Activated CD8-positive, alpha-beta T cell treated with anti-CD3 and anti-CD28 coated beads for 36 hours (primary cell): ENCODE measurements at regions of chr10 and their contacts with region 1.

Region 1: GRCh38 chr10:97701438-97702069 is 12.0 kb upstream of the MARVELD1 start:
- DNase-seq: peak; percentile 61
- ATAC-seq: peak; percentile 99
- H3K4me3 Mint-ChIP-seq: no peak overlapping the region
- H3K27ac Mint-ChIP-seq: no peak overlapping the region
- H3K4me1 Mint-ChIP-seq: no peaks in the 10 kb centered on the region
- H3K27me3 Mint-ChIP-seq: no peaks in the 10 kb centered on the region
- CTCF ChIP-seq: peak; percentile 89

Region 2: DNA sequence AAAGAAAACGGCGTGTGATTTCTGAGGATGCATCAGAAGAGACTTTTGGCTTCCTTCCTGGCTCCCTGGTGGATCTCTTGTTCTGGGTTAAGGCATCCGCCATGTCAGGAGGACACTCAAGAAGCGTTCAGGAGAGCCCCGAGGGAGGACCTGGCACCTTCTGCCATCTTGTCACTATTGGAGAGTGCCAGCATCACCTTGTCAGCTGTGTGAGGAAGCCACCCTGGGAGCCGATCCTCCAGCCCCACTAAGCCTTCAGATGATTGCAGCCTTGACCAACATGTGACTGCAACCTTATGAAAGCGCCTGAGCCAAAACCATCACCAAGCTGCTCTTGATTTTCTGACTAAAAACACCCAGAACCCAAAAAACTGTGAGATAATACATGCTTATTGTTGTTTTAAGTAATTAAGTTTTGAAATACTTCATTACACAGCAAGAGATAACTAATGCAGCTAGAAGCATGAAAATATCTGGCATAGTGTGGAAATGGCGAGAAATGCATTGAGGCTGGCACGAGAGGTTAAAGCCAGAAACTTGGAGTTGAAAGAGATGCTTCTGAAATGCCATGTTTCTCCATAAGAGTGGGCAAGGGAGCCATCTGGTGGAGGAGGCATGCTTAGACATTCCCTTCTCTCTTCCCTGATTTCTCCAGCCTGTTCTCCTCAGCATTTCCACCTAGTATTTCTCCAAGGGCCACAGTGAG is 29.9 kb after region 1 on chr10:
- CTCF ChIA-PET with region 1: interaction called, 537 read pairs
- POLR2A ChIA-PET with region 1: no interaction called
- intact Hi-C with region 1: no loop called
- DNase-seq: peak; percentile 69
- ATAC-seq: peak; percentile 58
- H3K4me3 Mint-ChIP-seq: no peak overlapping the region
- H3K27ac Mint-ChIP-seq: no peak overlapping the region
- H3K4me1 Mint-ChIP-seq: peaks cover 6% of the 10 kb centered on the region
- H3K27me3 Mint-ChIP-seq: peaks cover 3% of the 10 kb centered on the region
- CTCF ChIP-seq: peak; percentile 86

Region 3: GRCh38 chr10:97903128-97904017 is 201.8 kb after region 1 on chr10:
- CTCF ChIA-PET with region 1: no interaction called
- POLR2A ChIA-PET with region 1: no interaction called
- intact Hi-C with region 1: no loop called
- DNase-seq: no peak
- ATAC-seq: no peak
- H3K4me3 Mint-ChIP-seq: no peak overlapping the region
- H3K27ac Mint-ChIP-seq: no peak overlapping the region
- H3K4me1 Mint-ChIP-seq: no peaks in the 10 kb centered on the region
- H3K27me3 Mint-ChIP-seq: peaks cover 3% of the 10 kb centered on the region
- CTCF ChIP-seq: no peak